ENCODE measurements at regions of chr15 and their contacts with region 1.

Region 1: GRCh38 chr15:29935276-29936020 is 113.2 kb upstream of the TJP1 start:
- DNase-seq: peak; percentile 48
- H3K4me3 ChIP-seq: no peak overlapping the region
- H3K27ac ChIP-seq: no peak overlapping the region
- H3K4me1 ChIP-seq: no peaks in the 10 kb centered on the region
- H3K27me3 ChIP-seq: no peaks in the 10 kb centered on the region
- CTCF ChIP-seq: peak; percentile 41

Region 2: DNA sequence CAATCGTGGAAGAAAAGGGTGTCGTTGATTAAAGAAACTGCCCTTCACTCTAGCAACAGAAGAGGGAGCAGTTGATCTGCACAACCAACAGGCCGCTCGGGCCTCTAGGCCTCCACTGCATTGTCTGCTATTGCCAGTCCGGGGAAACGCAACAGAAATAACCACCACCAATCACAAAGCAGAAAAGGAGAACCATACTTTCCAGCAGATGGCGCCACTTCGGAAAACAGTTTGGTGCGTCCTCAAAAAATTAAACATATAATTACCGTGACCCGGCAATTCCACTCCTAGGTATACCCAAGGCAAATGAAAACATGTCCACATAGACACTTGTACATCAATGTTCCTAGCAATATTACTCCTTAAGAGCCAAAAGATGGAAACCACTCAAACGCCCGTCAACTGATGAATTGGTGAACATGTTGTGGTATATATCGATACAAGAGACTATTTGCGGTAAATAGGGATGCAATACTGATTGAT is 267.3 kb before region 1 on chr15:
- intact Hi-C with region 1: loop called (anchors 5 kb)
- DNase-seq: peak; percentile 85
- H3K4me3 ChIP-seq: no peak overlapping the region
- H3K27ac ChIP-seq: no peak overlapping the region
- H3K4me1 ChIP-seq: peaks cover 5% of the 10 kb centered on the region
- H3K27me3 ChIP-seq: no peaks in the 10 kb centered on the region
- CTCF ChIP-seq: peak; percentile 77

Region 3: DNA sequence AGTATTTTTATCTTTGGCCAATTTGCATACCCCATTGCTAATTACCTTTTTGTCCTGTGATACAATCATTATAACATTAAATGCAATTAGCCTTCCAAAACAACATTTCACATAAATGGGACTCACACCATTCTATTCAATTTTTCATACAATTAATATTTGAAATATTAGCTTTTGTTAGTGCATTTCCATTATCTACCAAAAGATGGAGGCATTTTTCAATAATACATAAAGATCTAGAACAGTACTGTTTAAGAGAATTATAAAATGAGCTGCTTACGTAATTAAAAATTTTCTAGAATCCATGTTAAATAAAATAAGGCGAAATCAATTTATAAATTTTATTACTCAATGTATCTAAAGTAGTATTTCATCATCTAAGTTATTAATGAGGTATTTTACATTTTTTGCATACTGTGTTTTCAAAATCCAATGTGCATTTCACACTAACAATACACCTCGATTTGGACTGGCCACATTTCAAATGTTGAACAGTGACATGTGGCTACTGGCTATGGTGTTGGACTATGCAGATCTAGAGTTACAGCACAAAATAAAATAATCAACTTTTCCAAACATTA is 187.5 kb before region 1 on chr15:
- intact Hi-C with region 1: loop called (anchors 10 kb)
- DNase-seq: no peak
- H3K4me3 ChIP-seq: no peak overlapping the region
- H3K27ac ChIP-seq: no peak overlapping the region
- H3K4me1 ChIP-seq: no peaks in the 10 kb centered on the region
- H3K27me3 ChIP-seq: no peaks in the 10 kb centered on the region
- CTCF ChIP-seq: no peak

Region 4: GRCh38 chr15:30073915-30074314 is 138.5 kb after region 1 on chr15:
- intact Hi-C with region 1: loop called (anchors 10 kb)
- DNase-seq: no peak
- H3K4me3 ChIP-seq: no peak overlapping the region
- H3K27ac ChIP-seq: no peak overlapping the region
- H3K4me1 ChIP-seq: no peaks in the 10 kb centered on the region
- H3K27me3 ChIP-seq: no peaks in the 10 kb centered on the region
- CTCF ChIP-seq: no peak